ENCODE measurements at regions of chr5 and their contacts with region 1.

Region 1: DNA sequence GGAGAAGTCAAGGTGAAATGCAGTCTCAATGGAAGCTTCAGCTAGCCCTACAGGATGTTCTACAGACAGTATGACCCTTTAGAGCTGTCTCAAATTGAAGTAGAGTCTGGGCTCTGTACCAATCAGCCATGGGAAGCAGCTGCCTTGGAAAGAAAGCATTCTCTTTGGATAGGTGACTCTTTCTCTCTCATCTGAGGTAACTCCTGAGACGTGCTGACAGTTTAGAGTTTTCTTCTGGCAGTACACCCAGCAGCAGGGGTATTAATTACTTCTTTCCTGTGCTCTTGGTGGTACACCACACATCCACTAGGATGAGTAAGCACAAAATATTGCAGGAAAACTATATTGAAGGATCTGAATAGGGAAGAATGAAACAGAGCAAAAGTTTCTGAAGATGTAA is 329.6 kb upstream of the RGMB start:
- DNase-seq: no peak
- ATAC-seq: no peak
- H3K4me3 ChIP-seq: no peak overlapping the region
- H3K27ac ChIP-seq: no peak overlapping the region
- H3K4me1 ChIP-seq: no peaks in the 10 kb centered on the region
- H3K27me3 ChIP-seq: no peaks in the 10 kb centered on the region
- CTCF ChIP-seq: no peak

Region 2: DNA sequence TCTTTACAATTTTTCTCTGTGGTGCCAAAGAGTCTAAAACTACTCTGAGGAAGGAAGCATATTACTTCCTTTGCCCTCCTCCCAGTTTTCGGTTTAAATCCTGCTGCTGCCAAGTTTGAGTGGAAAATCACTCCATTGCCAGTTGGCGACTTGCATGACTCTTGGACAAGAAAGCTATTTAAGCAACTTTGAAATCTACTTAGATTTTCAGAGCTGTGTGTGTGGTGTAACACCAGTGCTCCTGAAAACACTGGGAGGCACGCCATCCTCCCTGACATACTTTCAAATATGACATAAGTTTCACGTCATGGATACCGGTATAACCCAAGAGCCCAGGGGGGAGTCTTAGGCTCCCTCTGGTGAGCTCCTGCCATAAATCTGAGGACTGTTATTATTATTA is 1177.3 kb before region 1 on chr5:
- CTCF ChIA-PET with region 1: no interaction called
- POLR2A ChIA-PET with region 1: interaction called, 10 read pairs
- in situ Hi-C with region 1: no loop called
- intact Hi-C with region 1: no loop called
- DNase-seq: no peak
- ATAC-seq: no peak
- H3K4me3 ChIP-seq: no peak overlapping the region
- H3K27ac ChIP-seq: no peak overlapping the region
- H3K4me1 ChIP-seq: no peaks in the 10 kb centered on the region; the same call in 1 of the 2 replicates
- H3K27me3 ChIP-seq: no peaks in the 10 kb centered on the region
- CTCF ChIP-seq: no peak